Naive thymus-derived CD4-positive, alpha-beta T cell (primary cell): ENCODE measurements at regions of chr2 and their contacts with region 1.

Region 1: GRCh38 chr2:206765242-206766056 is at the starts of genes FASTKD2 and MDH1B:
- DNase-seq: peak; percentile 62 to 91 (median 85)
- ATAC-seq: peak; percentile 93
- H3K4me3 ChIP-seq: peak within 1 kb of the TSS; percentile 70
- H3K4me3 Mint-ChIP-seq: peak within 1 kb of the TSS in 8 of 10 donors; percentile 89 to 96 (median 94)
- H3K27ac ChIP-seq: peak within 1 kb of the TSS; percentile 95
- H3K27ac Mint-ChIP-seq: peak within 1 kb of the TSS; percentile 93 to 99 (median 97)
- H3K4me1 ChIP-seq: peaks cover 12 to 16% of the 10 kb centered on the region in 2 donors
- H3K4me1 Mint-ChIP-seq: peaks cover 13 to 46% (median 41%) of the 10 kb centered on the region in 7 donors
- H3K27me3 ChIP-seq: no peaks in the 10 kb centered on the region
- H3K27me3 Mint-ChIP-seq: peaks cover 0 to 4% (median 0%) of the 10 kb centered on the region in 5 donors
- total RNA-seq, gene FASTKD2: 16.5 to 31.9 (median 24.5) TPM
- total RNA-seq, gene MDH1B: 0.17 to 0.54 (median 0.24) TPM in 4 of 5 experiments, not detected in the other

Region 2: DNA sequence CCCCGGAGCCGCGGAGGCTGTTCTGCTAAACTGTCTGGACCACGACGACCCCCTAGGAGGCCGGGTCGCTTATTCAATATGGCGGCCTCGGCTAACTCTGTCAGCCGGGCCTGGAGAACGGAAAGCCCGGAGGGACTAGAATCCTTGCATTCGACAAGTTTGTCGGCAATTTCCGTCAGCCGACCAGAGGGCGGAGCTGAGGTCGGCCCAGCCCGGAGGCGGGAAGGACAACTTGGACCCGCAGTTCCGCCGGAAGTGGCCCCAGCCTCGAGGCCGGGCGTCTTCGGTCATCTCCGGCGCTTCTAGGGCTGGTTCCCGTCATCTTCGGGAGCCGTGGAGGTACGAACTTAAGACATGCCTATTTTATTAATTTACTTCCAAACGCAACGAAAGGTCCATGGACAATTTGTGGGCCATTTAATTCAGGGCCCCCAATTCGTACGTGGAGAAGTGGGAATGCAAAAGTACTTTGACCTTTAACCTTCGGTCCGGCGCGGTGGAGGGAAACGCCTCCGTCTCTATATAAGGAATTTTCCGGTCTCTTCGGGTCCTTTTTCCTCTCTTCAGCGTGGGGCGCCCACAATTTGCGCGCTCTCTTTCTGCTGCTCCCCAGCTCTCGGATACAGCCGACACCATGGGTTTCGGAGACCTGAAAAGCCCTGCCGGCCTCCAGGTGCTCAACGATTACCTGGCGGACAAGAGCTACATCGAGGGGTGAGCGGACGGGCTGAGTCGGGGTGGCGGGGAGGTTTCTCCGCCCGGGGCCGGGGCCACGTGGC is 605.9 kb before region 1 on chr2 and contains the starts of genes EEF1B2 and NDUFS1:
- CTCF ChIA-PET with region 1: no interaction called
- POLR2A ChIA-PET with region 1: no interaction called
- intact Hi-C with region 1: loop called (anchors 1 kb)
- DNase-seq: peak; percentile 88 to 97 (median 96)
- ATAC-seq: peak; percentile 94
- H3K4me3 ChIP-seq: peak within 1 kb of the TSS; percentile 95
- H3K4me3 Mint-ChIP-seq: peak within 1 kb of the TSS; percentile 95 to 100 (median 98)
- H3K27ac ChIP-seq: peak within 1 kb of the TSS; percentile 96
- H3K27ac Mint-ChIP-seq: peak within 1 kb of the TSS; percentile 97 to 99 (median 99)
- H3K4me1 ChIP-seq: peaks cover 19 to 29% of the 10 kb centered on the region in 2 donors
- H3K4me1 Mint-ChIP-seq: peaks cover 36 to 78% (median 62%) of the 10 kb centered on the region in 7 donors
- H3K27me3 ChIP-seq: no peaks in the 10 kb centered on the region
- H3K27me3 Mint-ChIP-seq: no peaks in the 10 kb centered on the region
- total RNA-seq, gene EEF1B2: 542 to 1,236 (median 1,148) TPM
- total RNA-seq, gene NDUFS1: 37.3 to 61.9 (median 56.3) TPM

Region 3: DNA sequence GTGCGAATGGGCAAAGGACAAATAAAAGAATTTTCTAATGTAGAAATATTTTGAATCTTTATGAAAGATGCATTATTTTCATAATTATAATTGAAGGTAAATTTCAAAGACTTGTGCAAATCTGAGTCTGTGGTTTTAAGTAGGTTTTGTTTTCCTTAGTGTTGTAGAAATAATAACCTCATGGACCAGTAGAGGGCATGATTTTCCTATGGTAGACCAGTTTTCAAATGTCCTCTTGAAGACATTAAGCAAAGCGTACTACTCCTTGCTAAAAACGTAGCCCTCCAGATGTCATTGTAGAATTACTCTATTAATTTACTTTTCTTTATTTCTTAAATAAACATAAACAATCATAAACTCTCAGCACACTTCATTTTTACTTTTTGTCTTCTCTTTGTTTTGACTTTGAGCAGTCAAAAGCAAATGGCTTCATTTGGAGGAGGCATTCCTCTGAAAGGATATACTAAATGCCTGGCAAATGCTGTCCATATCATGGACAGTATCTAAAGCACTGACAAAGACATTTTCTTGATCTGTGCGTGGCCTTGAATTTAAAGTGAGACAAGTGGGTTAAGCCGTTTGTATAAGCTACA is 209.0 kb before region 1 on chr2:
- CTCF ChIA-PET with region 1: no interaction called
- POLR2A ChIA-PET with region 1: no interaction called
- intact Hi-C with region 1: loop called (anchors 5 kb)
- DNase-seq: peak in 5 of 9 donors; percentile 4 to 45 (median 32)
- ATAC-seq: no peak
- H3K4me3 ChIP-seq: no peak overlapping the region
- H3K4me3 Mint-ChIP-seq: no peak overlapping the region
- H3K27ac ChIP-seq: no peak overlapping the region
- H3K27ac Mint-ChIP-seq: no peak overlapping the region
- H3K4me1 ChIP-seq: peaks cover 0 to 6% of the 10 kb centered on the region in 2 donors
- H3K4me1 Mint-ChIP-seq: peaks cover 1 to 37% (median 26%) of the 10 kb centered on the region in 7 donors
- H3K27me3 ChIP-seq: no peaks in the 10 kb centered on the region
- H3K27me3 Mint-ChIP-seq: peaks cover 5 to 29% (median 11%) of the 10 kb centered on the region in 5 donors

Region 4: DNA sequence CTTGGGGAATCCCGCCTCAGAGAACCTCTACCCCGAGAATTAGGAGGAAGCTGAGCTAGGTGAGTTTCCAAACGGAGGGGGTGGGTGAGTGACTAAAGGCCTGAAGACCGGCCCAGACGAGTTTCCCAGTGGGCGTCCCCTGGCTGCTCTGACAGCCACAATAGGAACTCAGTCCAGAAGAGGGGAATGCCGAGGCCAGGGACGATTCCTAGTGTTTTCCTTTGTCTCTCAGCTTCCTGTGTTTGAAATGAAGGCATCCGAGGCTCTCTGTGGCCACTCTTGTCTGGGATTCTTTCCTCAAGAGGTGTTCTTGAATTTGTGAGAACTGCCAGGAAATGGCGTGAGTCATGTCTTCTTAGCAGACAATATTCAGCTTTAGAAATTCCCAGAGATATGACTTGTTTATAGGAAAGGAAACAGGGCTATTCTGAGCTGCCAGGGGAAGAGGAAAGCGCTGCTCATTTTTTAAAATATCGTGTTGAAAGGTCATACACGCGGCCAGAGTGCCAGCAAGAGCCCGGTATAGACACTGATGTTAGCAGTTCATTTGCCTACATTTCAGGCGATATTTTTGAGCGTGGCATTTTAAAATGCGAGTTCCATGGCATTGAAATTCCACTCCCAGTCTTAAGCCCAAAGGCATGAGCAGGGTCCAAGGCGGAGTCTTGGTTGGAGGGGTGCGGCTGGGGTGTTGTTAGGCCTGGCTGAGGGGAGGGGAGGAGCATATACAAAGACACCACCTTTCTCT is 569.3 kb after region 1 on chr2:
- CTCF ChIA-PET with region 1: no interaction called
- POLR2A ChIA-PET with region 1: no interaction called
- intact Hi-C with region 1: loop called in 1 of 2 experiments (anchors 10 kb)
- DNase-seq: peak in 1 of 9 donors; percentile 57
- ATAC-seq: no peak
- H3K4me3 ChIP-seq: no peak overlapping the region
- H3K4me3 Mint-ChIP-seq: peak overlapping the region in 2 of 10 donors; percentile 20 to 59
- H3K27ac ChIP-seq: no peak overlapping the region
- H3K27ac Mint-ChIP-seq: peak overlapping the region in 1 of 9 donors; percentile 84
- H3K4me1 ChIP-seq: peaks cover 0 to 20% of the 10 kb centered on the region in 2 donors
- H3K4me1 Mint-ChIP-seq: peaks cover 9 to 75% (median 17%) of the 10 kb centered on the region in 7 donors
- H3K27me3 ChIP-seq: no peaks in the 10 kb centered on the region
- H3K27me3 Mint-ChIP-seq: no peaks in the 10 kb centered on the region

Region 5: DNA sequence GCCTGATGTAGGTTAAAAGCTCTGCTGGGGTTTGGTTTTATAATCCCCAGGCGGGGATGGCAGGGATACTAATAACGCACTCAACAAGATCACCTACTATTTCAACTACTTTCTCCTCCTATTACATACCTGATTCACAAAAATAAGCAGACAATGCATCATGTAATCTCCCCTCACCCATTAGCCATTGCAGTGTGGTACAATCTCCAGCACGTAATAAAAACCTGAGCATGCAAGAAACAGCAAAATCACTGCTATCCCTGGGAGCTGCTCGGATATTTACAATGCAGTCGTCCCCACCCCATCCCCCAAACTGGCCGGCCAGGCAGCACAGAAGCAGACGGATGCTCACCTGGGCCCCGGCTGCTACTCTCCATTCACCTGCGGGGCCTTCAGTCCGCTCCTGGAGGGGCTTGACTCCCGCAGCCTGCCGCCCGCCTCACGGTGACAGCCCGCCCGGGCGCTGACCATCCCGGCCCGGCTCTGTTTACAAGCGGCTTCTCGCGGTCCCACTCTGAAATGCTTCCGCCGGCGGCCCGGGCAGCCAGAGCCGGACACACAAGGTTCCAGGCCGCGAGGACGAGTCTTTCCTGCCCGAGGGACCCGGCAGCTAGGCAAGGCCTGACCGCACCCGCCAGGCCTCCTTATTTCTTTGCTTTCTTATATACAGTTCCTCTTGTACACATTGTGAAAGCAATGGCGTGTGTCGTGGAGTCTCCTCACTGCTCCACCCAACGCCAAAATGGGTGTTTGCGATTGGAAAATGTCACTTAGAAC is 1259.8 kb after region 1 on chr2 and contains the start of gene PLEKHM3:
- CTCF ChIA-PET with region 1: no interaction called
- POLR2A ChIA-PET with region 1: no interaction called
- intact Hi-C with region 1: loop called (anchors 2 to 5 kb)
- DNase-seq: peak; percentile 12 to 80 (median 62)
- ATAC-seq: peak; percentile 93
- H3K4me3 ChIP-seq: peak within 1 kb of the TSS; percentile 88
- H3K4me3 Mint-ChIP-seq: peak within 1 kb of the TSS; percentile 85 to 100 (median 96)
- H3K27ac ChIP-seq: peak within 1 kb of the TSS; percentile 76
- H3K27ac Mint-ChIP-seq: peak within 1 kb of the TSS; percentile 89 to 98 (median 94)
- H3K4me1 ChIP-seq: peaks cover 0 to 4% of the 10 kb centered on the region in 2 donors
- H3K4me1 Mint-ChIP-seq: peaks cover 12 to 34% (median 27%) of the 10 kb centered on the region in 7 donors
- H3K27me3 ChIP-seq: no peaks in the 10 kb centered on the region
- H3K27me3 Mint-ChIP-seq: no peaks in the 10 kb centered on the region
- total RNA-seq, gene PLEKHM3: 6.1 to 19.4 (median 15.5) TPM

Region 6: DNA sequence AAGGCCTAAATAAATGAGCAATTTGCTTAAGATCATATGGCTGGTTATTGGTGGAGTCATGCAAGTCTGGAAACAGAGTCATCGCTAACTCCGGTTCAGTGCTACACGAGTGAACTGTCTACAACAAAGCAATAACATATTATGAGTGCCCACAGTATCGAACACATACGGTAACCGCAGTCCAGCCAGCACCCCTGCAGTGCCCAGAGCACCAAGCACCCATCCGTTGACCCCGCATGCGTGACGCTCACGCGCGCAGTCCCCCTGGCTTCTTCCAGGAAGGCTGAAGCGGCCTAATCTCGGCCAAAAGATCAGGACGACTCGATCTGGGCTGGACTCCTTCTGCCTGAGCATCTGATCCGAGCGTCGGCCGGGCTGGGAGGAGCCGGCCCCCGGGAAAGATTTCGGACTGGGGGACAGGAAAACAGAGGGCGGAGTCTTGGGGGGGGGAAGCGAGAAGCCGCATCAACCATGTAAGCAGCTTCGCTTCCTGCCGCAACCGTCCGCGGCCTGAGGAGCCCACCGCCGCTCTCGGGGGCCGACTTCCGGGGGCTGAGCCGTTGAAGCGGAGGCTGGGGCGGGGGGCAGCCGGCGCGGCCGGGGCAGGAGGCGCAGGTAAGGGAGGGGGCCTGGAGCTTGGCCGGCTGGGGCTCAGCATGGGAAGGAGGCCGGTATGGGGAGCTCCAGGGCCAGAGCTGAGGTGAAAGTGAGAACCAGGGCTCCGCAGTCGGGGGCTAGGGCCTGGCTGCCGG is 1500.5 kb after region 1 on chr2 and contains the start of gene PIKFYVE:
- CTCF ChIA-PET with region 1: no interaction called
- POLR2A ChIA-PET with region 1: no interaction called
- intact Hi-C with region 1: loop called (anchors 5 kb)
- DNase-seq: peak; percentile 63 to 87 (median 83)
- ATAC-seq: peak; percentile 94
- H3K4me3 ChIP-seq: peak within 1 kb of the TSS; percentile 97
- H3K4me3 Mint-ChIP-seq: peak within 1 kb of the TSS; percentile 90 to 99 (median 96)
- H3K27ac ChIP-seq: peak within 1 kb of the TSS; percentile 83
- H3K27ac Mint-ChIP-seq: peak within 1 kb of the TSS; percentile 87 to 98 (median 95)
- H3K4me1 ChIP-seq: peaks cover 12 to 16% of the 10 kb centered on the region in 2 donors
- H3K4me1 Mint-ChIP-seq: peaks cover 9 to 60% (median 53%) of the 10 kb centered on the region in 7 donors
- H3K27me3 ChIP-seq: no peaks in the 10 kb centered on the region
- H3K27me3 Mint-ChIP-seq: peaks cover 0 to 5% (median 0%) of the 10 kb centered on the region in 5 donors
- total RNA-seq, gene PIKFYVE: 33.4 to 52.3 (median 39.1) TPM